K562 (cell line): ENCODE measurements at regions of chr5 and their contacts with region 1.

Region 1: DNA sequence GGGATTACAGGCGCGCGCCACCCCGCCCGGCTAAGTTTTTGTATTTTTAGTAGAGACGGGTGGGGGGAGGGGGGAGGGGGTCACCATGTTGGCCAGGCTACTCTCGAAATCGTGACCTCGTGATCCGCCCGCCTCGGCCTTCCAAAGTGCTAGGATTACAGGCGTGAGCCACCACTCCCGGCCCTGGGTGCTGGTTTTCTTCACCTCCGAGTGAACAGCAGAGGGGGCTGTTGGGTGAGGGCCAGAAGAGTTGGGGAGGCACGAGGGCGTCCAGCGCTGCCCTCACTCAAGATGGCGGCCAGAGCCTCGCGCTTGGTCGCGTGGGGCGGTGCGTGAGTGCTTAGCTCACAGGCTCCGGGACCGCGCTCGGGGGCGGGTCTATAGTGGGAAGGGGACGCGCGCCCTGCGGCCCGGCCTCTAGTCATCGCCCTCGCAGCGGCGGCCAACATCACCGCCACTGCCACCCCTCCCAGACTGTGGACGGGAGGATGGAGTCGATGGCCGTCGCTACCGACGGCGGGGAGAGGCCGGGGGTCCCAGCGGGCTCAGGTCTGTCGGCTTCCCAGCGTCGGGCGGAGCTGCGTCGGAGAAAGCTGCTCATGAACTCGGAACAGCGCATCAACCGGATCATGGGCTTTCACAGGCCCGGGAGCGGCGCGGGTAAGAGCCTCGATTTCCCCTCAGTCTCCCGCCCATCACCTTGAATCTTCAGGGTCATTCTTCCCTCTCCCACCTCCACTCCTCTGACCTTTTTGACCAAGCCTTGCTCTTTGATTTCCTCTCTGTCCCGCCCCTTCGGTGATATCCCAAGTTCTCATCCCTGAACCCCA is at the start of gene CAMLG:
- DNase-seq: peak; percentile 93 to 99 (median 94)
- ATAC-seq: peak; percentile 98
- H3K4me3 ChIP-seq: peak within 1 kb of the TSS; percentile 71
- H3K27ac ChIP-seq: peak within 1 kb of the TSS; percentile 71
- H3K4me1 ChIP-seq: peaks cover 13 to 15% of the 10 kb centered on the region in 2 experiments
- H3K27me3 ChIP-seq: no peaks in the 10 kb centered on the region
- CTCF ChIP-seq: peak; percentile 77 to 84 (median 83)
- EP300 ChIP-seq: no peak
- POLR2A ChIP-seq: peak; percentile 85
- RAD21 ChIP-seq: peak; percentile 62 to 81
- polyA plus RNA-seq, gene CAMLG: 16.3 to 17.3 TPM

Region 2: DNA sequence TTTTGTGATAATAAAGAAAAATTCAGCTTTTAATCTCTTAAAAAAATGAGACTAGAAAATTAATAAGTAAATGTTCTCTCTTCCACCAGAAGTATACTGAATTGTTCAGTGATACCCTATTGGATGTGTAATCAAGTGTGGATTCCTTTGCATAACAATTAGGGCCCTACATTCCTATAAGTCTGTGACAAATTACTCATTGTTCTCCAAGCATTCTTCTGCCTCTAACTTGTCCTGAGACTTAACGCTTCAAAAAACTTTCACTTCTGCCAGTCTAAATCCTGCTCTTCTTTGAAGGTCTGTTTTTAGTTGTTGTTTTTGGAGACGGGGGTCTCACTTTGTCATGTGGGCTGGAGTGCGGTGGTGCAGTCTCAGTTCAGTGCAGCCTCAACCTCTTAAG is 11.1 kb after region 1 on chr5:
- CTCF ChIA-PET with region 1: no interaction called
- POLR2A ChIA-PET with region 1: interaction called, 15 read pairs
- in situ Hi-C with region 1: no loop called
- intact Hi-C with region 1: no loop called
- DNase-seq: no peak
- ATAC-seq: no peak
- H3K4me3 ChIP-seq: no peak overlapping the region
- H3K27ac ChIP-seq: no peak overlapping the region
- H3K4me1 ChIP-seq: no peaks in the 10 kb centered on the region
- H3K27me3 ChIP-seq: no peaks in the 10 kb centered on the region
- CTCF ChIP-seq: no peak
- EP300 ChIP-seq: no peak
- POLR2A ChIP-seq: no peak
- RAD21 ChIP-seq: no peak

Region 3: GRCh38 chr5:134758504-134759341 is 20.4 kb after region 1 on chr5 and contains the start of gene DDX46:
- CTCF ChIA-PET with region 1: no interaction called
- POLR2A ChIA-PET with region 1: interaction called, 21 read pairs
- in situ Hi-C with region 1: no loop called
- intact Hi-C with region 1: loop called (anchors 1 kb)
- DNase-seq: peak; percentile 93 to 97 (median 94)
- ATAC-seq: peak; percentile 98
- H3K4me3 ChIP-seq: peak within 1 kb of the TSS; percentile 80
- H3K27ac ChIP-seq: peak within 1 kb of the TSS; percentile 81
- H3K4me1 ChIP-seq: peaks cover 6 to 15% of the 10 kb centered on the region in 2 experiments; a peak in 4 of 5 replicates
- H3K27me3 ChIP-seq: no peaks in the 10 kb centered on the region
- CTCF ChIP-seq: peak; percentile 92 to 93 (median 92)
- EP300 ChIP-seq: 0 out of 2 replicates have a peak, but pooled peaks have one; percentile 26
- POLR2A ChIP-seq: peak; percentile 96
- RAD21 ChIP-seq: 0 out of 4 replicates have a peak, but pooled peaks of 1 of the 2 experiments have one; percentile 7
- polyA plus RNA-seq, gene DDX46: 26.2 to 32.3 TPM

Region 4: GRCh38 chr5:134845852-134846640 is 107.7 kb after region 1 on chr5 and contains the start of gene C5orf24:
- CTCF ChIA-PET with region 1: no interaction called
- POLR2A ChIA-PET with region 1: interaction called, 3 read pairs
- in situ Hi-C with region 1: no loop called
- intact Hi-C with region 1: loop called (anchors 5 kb)
- DNase-seq: peak; percentile 90 to 97 (median 91)
- ATAC-seq: peak; percentile 93
- H3K4me3 ChIP-seq: peak within 1 kb of the TSS; percentile 93
- H3K27ac ChIP-seq: peak within 1 kb of the TSS; percentile 96
- H3K4me1 ChIP-seq: peaks cover 16 to 34% of the 10 kb centered on the region in 2 experiments; a peak in 4 of 5 replicates
- H3K27me3 ChIP-seq: no peaks in the 10 kb centered on the region
- CTCF ChIP-seq: no peak
- EP300 ChIP-seq: no peak
- POLR2A ChIP-seq: peak; percentile 95
- RAD21 ChIP-seq: no peak
- polyA plus RNA-seq, gene C5orf24: 8.9 to 10.6 TPM